Naive thymus-derived CD4-positive, alpha-beta T cell (primary cell): ENCODE measurements at regions of chr4 and their contacts with region 1.

Region 1: GRCh38 chr4:22515145-22515887 is 550 bp downstream of the ADGRA3 start:
- DNase-seq: peak in 8 of 9 donors; percentile 17 to 56 (median 36)
- ATAC-seq: peak; percentile 75
- H3K4me3 ChIP-seq: peak overlapping the region; percentile 63
- H3K4me3 Mint-ChIP-seq: peak overlapping the region; percentile 90 to 99 (median 97)
- H3K27ac ChIP-seq: peak overlapping the region; percentile 40
- H3K27ac Mint-ChIP-seq: peak overlapping the region; percentile 56 to 92 (median 83)
- H3K4me1 ChIP-seq: peaks cover 0 to 3% of the 10 kb centered on the region in 2 donors
- H3K4me1 Mint-ChIP-seq: peaks cover 7 to 34% (median 27%) of the 10 kb centered on the region in 7 donors
- H3K27me3 ChIP-seq: no peaks in the 10 kb centered on the region
- H3K27me3 Mint-ChIP-seq: peaks cover 0 to 15% (median 0%) of the 10 kb centered on the region in 5 donors

Region 2: GRCh38 chr4:22237155-22237751 is 278.1 kb before region 1 on chr4:
- CTCF ChIA-PET with region 1: no interaction called
- POLR2A ChIA-PET with region 1: no interaction called
- intact Hi-C with region 1: loop called in 1 of 2 experiments (anchors 10 kb)
- DNase-seq: peak; percentile 11 to 57 (median 40)
- ATAC-seq: peak; percentile 73
- H3K4me3 ChIP-seq: no peak overlapping the region
- H3K4me3 Mint-ChIP-seq: peak overlapping the region; percentile 51 to 80 (median 68)
- H3K27ac ChIP-seq: peak overlapping the region; percentile 14
- H3K27ac Mint-ChIP-seq: peak overlapping the region in 5 of 9 donors; percentile 4 to 92 (median 48)
- H3K4me1 ChIP-seq: no peaks in the 10 kb centered on the region
- H3K4me1 Mint-ChIP-seq: peaks cover 0 to 35% (median 0%) of the 10 kb centered on the region in 7 donors
- H3K27me3 ChIP-seq: no peaks in the 10 kb centered on the region
- H3K27me3 Mint-ChIP-seq: peaks cover 0 to 15% (median 3%) of the 10 kb centered on the region in 5 donors

Region 3: GRCh38 chr4:22444813-22445212 is 70.5 kb before region 1 on chr4:
- CTCF ChIA-PET with region 1: no interaction called
- POLR2A ChIA-PET with region 1: no interaction called
- intact Hi-C with region 1: loop called in 1 of 2 experiments (anchors 5 kb)
- DNase-seq: peak in 1 of 9 donors; percentile 7
- ATAC-seq: peak; percentile 29
- H3K4me3 ChIP-seq: no peak overlapping the region
- H3K4me3 Mint-ChIP-seq: peak overlapping the region; percentile 31 to 88 (median 80)
- H3K27ac ChIP-seq: peak overlapping the region; percentile 57
- H3K27ac Mint-ChIP-seq: peak overlapping the region; percentile 85 to 96 (median 94)
- H3K4me1 ChIP-seq: peaks cover 0 to 16% of the 10 kb centered on the region in 2 donors
- H3K4me1 Mint-ChIP-seq: peaks cover 0 to 63% (median 37%) of the 10 kb centered on the region in 7 donors
- H3K27me3 ChIP-seq: no peaks in the 10 kb centered on the region
- H3K27me3 Mint-ChIP-seq: no peaks in the 10 kb centered on the region

Region 4: GRCh38 chr4:22607382-22607781 is 92.1 kb after region 1 on chr4:
- CTCF ChIA-PET with region 1: no interaction called
- POLR2A ChIA-PET with region 1: no interaction called
- intact Hi-C with region 1: loop called in 1 of 2 experiments (anchors 10 kb)
- DNase-seq: peak in 8 of 9 donors; percentile 16 to 74 (median 58)
- ATAC-seq: peak; percentile 97
- H3K4me3 ChIP-seq: no peak overlapping the region
- H3K4me3 Mint-ChIP-seq: peak overlapping the region in 5 of 10 donors; percentile 22 to 63 (median 42)
- H3K27ac ChIP-seq: no peak overlapping the region
- H3K27ac Mint-ChIP-seq: peak overlapping the region in 7 of 9 donors; percentile 13 to 84 (median 62)
- H3K4me1 ChIP-seq: peaks cover 0 to 27% of the 10 kb centered on the region in 2 donors
- H3K4me1 Mint-ChIP-seq: peaks cover 13 to 51% (median 46%) of the 10 kb centered on the region in 7 donors
- H3K27me3 ChIP-seq: no peaks in the 10 kb centered on the region
- H3K27me3 Mint-ChIP-seq: no peaks in the 10 kb centered on the region

Region 5: DNA sequence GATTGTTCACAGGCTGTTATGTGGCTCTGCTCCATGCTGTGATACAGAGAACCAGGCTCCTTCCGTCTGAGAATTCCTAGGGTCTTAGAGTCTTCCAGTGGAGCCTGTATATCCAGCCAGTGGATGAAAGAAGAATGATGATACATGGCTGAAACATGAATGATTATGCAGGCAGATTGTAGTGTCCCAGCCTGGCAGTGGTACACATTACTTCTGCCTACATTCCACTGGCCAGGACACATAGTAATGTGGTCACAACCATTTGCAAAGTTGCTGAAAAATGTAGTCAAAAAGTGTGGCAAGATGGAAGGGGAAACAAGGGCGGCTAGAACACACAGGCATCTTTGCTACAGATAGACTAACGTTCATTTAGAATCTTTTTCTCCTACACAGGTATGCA is 172.9 kb after region 1 on chr4:
- CTCF ChIA-PET with region 1: no interaction called
- POLR2A ChIA-PET with region 1: no interaction called
- intact Hi-C with region 1: loop called in 1 of 2 experiments (anchors 1 kb)
- DNase-seq: no peak
- ATAC-seq: no peak
- H3K4me3 ChIP-seq: no peak overlapping the region
- H3K4me3 Mint-ChIP-seq: no peak overlapping the region
- H3K27ac ChIP-seq: no peak overlapping the region
- H3K27ac Mint-ChIP-seq: peak overlapping the region in 1 of 9 donors; percentile 60
- H3K4me1 ChIP-seq: no peaks in the 10 kb centered on the region
- H3K4me1 Mint-ChIP-seq: peaks cover 3 to 51% (median 31%) of the 10 kb centered on the region in 7 donors
- H3K27me3 ChIP-seq: no peaks in the 10 kb centered on the region
- H3K27me3 Mint-ChIP-seq: peaks cover 0 to 7% (median 0%) of the 10 kb centered on the region in 5 donors